ENCODE measurements at regions of chr12 and their contacts with region 1.

Region 1: GRCh38 chr12:54032627-54033100 is at the start of gene HOXC5:
- DNase-seq: peak; percentile 31 to 79 (median 50)
- ATAC-seq: peak; percentile 63
- H3K4me3 ChIP-seq: no peak within 1 kb of the TSS
- H3K4me3 Mint-ChIP-seq: peak within 1 kb of the TSS; percentile 42
- H3K27ac ChIP-seq: no peak within 1 kb of the TSS
- H3K27ac Mint-ChIP-seq: no peak within 1 kb of the TSS
- H3K4me1 ChIP-seq: peaks cover 49% of the 10 kb centered on the region
- H3K4me1 Mint-ChIP-seq: peaks cover 22% of the 10 kb centered on the region
- H3K27me3 ChIP-seq: peaks cover 91 to 98% of the 10 kb centered on the region in 2 experiments
- H3K27me3 Mint-ChIP-seq: peaks cover 97% of the 10 kb centered on the region
- CTCF ChIP-seq: peak; percentile 81
- total RNA-seq, gene HOXC5: not detected

Region 2: GRCh38 chr12:54005853-54006686 is 26.6 kb before region 1 on chr12:
- CTCF ChIA-PET with region 1: interaction called, 19 read pairs
- POLR2A ChIA-PET with region 1: no interaction called
- intact Hi-C with region 1: no loop called
- DNase-seq: peak; percentile 68 to 91 (median 81)
- ATAC-seq: peak; percentile 80
- H3K4me3 ChIP-seq: peak overlapping the region; percentile 50
- H3K4me3 Mint-ChIP-seq: peak overlapping the region; percentile 84
- H3K27ac ChIP-seq: no peak overlapping the region
- H3K27ac Mint-ChIP-seq: no peak overlapping the region
- H3K4me1 ChIP-seq: peaks cover 41% of the 10 kb centered on the region
- H3K4me1 Mint-ChIP-seq: peaks cover 38% of the 10 kb centered on the region
- H3K27me3 ChIP-seq: peaks cover 93 to 96% of the 10 kb centered on the region in 2 experiments
- H3K27me3 Mint-ChIP-seq: peaks cover 100% of the 10 kb centered on the region
- CTCF ChIP-seq: peak; percentile 93

Region 3: GRCh38 chr12:54014377-54015017 is 18.2 kb before region 1 on chr12:
- CTCF ChIA-PET with region 1: interaction called, 3 read pairs
- POLR2A ChIA-PET with region 1: interaction called, 4 read pairs
- intact Hi-C with region 1: loop called in 1 of 2 experiments (anchors 2 kb)
- DNase-seq: no peak
- ATAC-seq: no peak
- H3K4me3 ChIP-seq: no peak overlapping the region
- H3K4me3 Mint-ChIP-seq: peak overlapping the region; percentile 56
- H3K27ac ChIP-seq: no peak overlapping the region
- H3K27ac Mint-ChIP-seq: no peak overlapping the region
- H3K4me1 ChIP-seq: peaks cover 52% of the 10 kb centered on the region
- H3K4me1 Mint-ChIP-seq: peaks cover 38% of the 10 kb centered on the region
- H3K27me3 ChIP-seq: peaks cover 90 to 95% of the 10 kb centered on the region in 2 experiments
- H3K27me3 Mint-ChIP-seq: peaks cover 93% of the 10 kb centered on the region
- CTCF ChIP-seq: no peak

Region 4: GRCh38 chr12:54201001-54201794 is 168.5 kb after region 1 on chr12:
- CTCF ChIA-PET with region 1: interaction called, 17 read pairs
- POLR2A ChIA-PET with region 1: interaction called, 5 read pairs
- intact Hi-C with region 1: no loop called
- DNase-seq: peak; percentile 46 to 83 (median 57)
- ATAC-seq: peak; percentile 98
- H3K4me3 ChIP-seq: no peak overlapping the region
- H3K4me3 Mint-ChIP-seq: no peak overlapping the region
- H3K27ac ChIP-seq: no peak overlapping the region
- H3K27ac Mint-ChIP-seq: no peak overlapping the region
- H3K4me1 ChIP-seq: peaks cover 5% of the 10 kb centered on the region
- H3K4me1 Mint-ChIP-seq: no peaks in the 10 kb centered on the region
- H3K27me3 ChIP-seq: peaks cover 50 to 61% of the 10 kb centered on the region in 2 experiments
- H3K27me3 Mint-ChIP-seq: peaks cover 89% of the 10 kb centered on the region
- CTCF ChIP-seq: peak; percentile 92

Region 5: GRCh38 chr12:54207484-54208294 is 175.0 kb after region 1 on chr12:
- CTCF ChIA-PET with region 1: interaction called, 17 read pairs
- POLR2A ChIA-PET with region 1: no interaction called
- intact Hi-C with region 1: no loop called
- DNase-seq: peak; percentile 59 to 84 (median 72)
- ATAC-seq: peak; percentile 96
- H3K4me3 ChIP-seq: no peak overlapping the region
- H3K4me3 Mint-ChIP-seq: no peak overlapping the region
- H3K27ac ChIP-seq: no peak overlapping the region
- H3K27ac Mint-ChIP-seq: no peak overlapping the region
- H3K4me1 ChIP-seq: peaks cover 7% of the 10 kb centered on the region
- H3K4me1 Mint-ChIP-seq: no peaks in the 10 kb centered on the region
- H3K27me3 ChIP-seq: peaks cover 13 to 31% of the 10 kb centered on the region in 2 experiments
- H3K27me3 Mint-ChIP-seq: peaks cover 53% of the 10 kb centered on the region
- CTCF ChIP-seq: peak; percentile 92